Activated CD4-positive, alpha-beta T cell treated with anti-CD3 and anti-CD28 coated beads, Interleukin-2, amount 10 ng/mL, durations not matched to agents 24 days and 14 days (primary cell): ENCODE measurements at regions of chr3 and their contacts with region 1.

Region 1: GRCh38 chr3:150737874-150738713 is 24.9 kb downstream of the SIAH2 start:
- DNase-seq: peak; percentile 72
- H3K4me3 Mint-ChIP-seq: peak overlapping the region; percentile 64
- H3K27ac Mint-ChIP-seq: peak overlapping the region; percentile 99
- H3K4me1 Mint-ChIP-seq: peaks cover 76% of the 10 kb centered on the region
- H3K27me3 Mint-ChIP-seq: no peaks in the 10 kb centered on the region

Region 2: GRCh38 chr3:150546226-150547044 is 191.7 kb before region 1 on chr3 and contains the starts of genes EIF2A and SERP1:
- intact Hi-C with region 1: loop called (anchors 1 kb)
- DNase-seq: peak; percentile 100
- H3K4me3 Mint-ChIP-seq: peak within 1 kb of the TSS; percentile 90
- H3K27ac Mint-ChIP-seq: peak within 1 kb of the TSS; percentile 95
- H3K4me1 Mint-ChIP-seq: peaks cover 51% of the 10 kb centered on the region
- H3K27me3 Mint-ChIP-seq: no peaks in the 10 kb centered on the region
- total RNA-seq, gene EIF2A: 125 and 133 TPM in 2 replicates
- total RNA-seq, gene SERP1: 88.8 and 103 TPM in 2 replicates

Region 3: GRCh38 chr3:150650243-150650642 is 87.9 kb before region 1 on chr3:
- intact Hi-C with region 1: no loop called
- DNase-seq: no peak
- H3K4me3 Mint-ChIP-seq: no peak overlapping the region
- H3K27ac Mint-ChIP-seq: no peak overlapping the region
- H3K4me1 Mint-ChIP-seq: no peaks in the 10 kb centered on the region
- H3K27me3 Mint-ChIP-seq: peaks cover 25% of the 10 kb centered on the region

Region 4: DNA sequence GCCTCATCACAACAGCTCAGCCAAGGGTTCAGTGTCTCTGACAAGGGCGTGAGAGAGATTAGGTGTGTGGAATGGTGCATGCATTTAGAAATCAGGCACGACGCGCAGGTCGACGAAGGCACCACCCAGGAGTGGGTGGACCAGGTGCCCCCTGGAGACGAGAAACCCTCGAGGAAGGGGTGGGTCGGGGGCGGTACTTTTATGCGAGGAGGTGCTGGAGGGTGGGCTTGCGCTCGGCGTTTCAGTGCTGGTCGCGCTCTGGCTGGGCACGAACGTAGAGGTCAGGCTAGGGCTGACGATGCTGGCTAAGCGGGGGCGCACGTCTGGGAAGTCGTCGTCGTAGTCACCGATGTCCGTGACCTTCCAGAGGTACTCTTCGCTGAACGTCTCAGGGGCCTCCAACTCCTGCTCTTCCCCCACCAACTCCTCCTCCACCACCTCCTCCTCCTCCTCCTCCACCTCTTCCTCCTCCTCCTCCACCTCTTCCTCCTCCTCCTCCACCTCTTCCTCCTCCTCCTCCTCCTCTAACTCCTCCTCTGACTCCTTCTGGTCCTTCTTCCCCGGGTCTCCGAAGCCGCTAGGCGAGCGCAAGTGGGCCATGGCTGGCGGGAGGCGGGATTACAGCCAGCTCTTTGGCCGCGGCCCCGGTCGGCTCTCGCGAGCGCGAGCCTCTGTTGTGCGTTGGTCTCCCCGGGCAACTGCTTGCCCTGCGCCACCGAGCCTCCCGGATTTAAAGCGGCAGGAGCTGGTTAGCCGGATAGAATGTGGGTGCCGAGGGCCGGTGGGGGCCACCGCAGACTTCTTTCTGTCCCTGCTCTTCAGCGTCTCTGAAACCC is 34.6 kb before region 1 on chr3 and contains the start of gene ERICH6:
- intact Hi-C with region 1: loop called (anchors 2 kb)
- DNase-seq: peak; percentile 95
- H3K4me3 Mint-ChIP-seq: peak within 1 kb of the TSS; percentile 92
- H3K27ac Mint-ChIP-seq: peak within 1 kb of the TSS; percentile 99
- H3K4me1 Mint-ChIP-seq: peaks cover 28% of the 10 kb centered on the region
- H3K27me3 Mint-ChIP-seq: peaks cover 10% of the 10 kb centered on the region
- total RNA-seq, gene ERICH6: not detected in 2 replicates

Region 5: DNA sequence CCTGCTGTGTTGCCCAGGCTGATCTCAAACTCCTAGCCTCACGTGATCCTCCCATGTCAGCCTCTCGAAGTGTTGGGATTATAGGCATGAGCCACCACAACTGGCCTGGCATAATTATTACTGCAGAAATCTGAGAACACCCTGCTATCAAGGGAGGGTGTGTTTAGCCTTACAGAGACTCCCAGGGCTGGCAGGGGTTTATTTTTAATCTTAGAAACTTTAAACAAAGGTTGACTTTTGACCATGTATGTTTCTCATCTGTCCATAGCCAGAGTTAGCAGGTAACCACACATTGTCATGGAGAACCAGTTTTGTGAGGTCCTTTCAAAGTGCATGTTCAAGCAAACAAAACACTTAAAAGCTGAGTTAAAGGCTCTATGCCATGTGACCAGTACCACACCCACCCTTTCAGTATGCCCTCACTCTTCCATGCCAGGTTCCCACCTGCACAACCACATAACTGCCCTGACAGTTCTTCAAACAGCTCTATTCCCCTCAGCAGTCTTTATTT is 13.7 kb after region 1 on chr3:
- intact Hi-C with region 1: loop called (anchors 1 kb)
- DNase-seq: no peak
- H3K4me3 Mint-ChIP-seq: peak overlapping the region; percentile 30
- H3K27ac Mint-ChIP-seq: peak overlapping the region; percentile 85
- H3K4me1 Mint-ChIP-seq: peaks cover 71% of the 10 kb centered on the region
- H3K27me3 Mint-ChIP-seq: no peaks in the 10 kb centered on the region

Region 6: GRCh38 chr3:151210676-151211381 is 472.7 kb after region 1 on chr3:
- intact Hi-C with region 1: loop called (anchors 2 kb)
- DNase-seq: peak; percentile 75
- H3K4me3 Mint-ChIP-seq: peak overlapping the region; percentile 76
- H3K27ac Mint-ChIP-seq: peak overlapping the region; percentile 90
- H3K4me1 Mint-ChIP-seq: peaks cover 56% of the 10 kb centered on the region
- H3K27me3 Mint-ChIP-seq: no peaks in the 10 kb centered on the region